Calu3 (cell line): ENCODE measurements at regions of chr5 and their contacts with region 1.

Region 1: GRCh38 chr5:172707285-172708182 is 63.5 kb downstream of the DUSP1 start:
- DNase-seq: peak; percentile 77
- H3K4me3 Mint-ChIP-seq: no peak overlapping the region
- H3K27ac Mint-ChIP-seq: no peak overlapping the region
- H3K4me1 Mint-ChIP-seq: no peaks in the 10 kb centered on the region
- H3K27me3 Mint-ChIP-seq: peaks cover 89% of the 10 kb centered on the region
- CTCF ChIP-seq: peak; percentile 75

Region 2: DNA sequence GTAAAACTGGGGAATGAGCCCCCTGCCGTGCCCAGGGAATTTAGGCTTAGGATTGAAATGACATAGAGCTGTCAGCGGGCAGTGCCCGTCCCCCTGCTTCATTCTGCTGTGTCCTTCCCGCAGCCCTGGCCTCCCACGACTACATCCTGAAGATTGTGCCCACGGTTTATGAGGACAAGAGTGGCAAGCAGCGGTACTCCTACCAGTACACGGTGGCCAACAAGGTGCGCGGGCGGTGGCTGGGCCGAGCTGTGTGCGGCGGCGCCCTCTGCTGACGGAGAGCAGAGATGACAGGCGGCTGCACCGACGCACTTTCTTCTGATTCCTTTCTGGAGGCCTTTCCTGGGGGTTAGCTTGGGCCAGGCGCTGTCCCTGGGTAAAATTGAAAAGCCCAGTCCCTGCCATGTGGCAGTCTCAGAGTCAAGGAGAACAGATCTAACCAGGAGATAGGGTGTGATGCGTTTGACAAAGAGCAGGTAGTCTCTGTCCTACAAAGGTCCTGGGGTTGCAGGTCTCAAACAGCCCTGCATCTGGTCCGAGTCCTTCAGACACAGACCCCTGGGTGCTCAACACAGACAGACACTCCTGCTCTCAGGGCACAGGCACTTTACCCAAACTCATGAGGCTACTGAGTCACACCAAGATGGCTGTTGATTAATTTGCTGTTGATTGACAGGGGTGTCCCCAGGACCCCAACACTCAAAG is 224.9 kb after region 1 on chr5:
- CTCF ChIA-PET with region 1: interaction called, 21 read pairs
- intact Hi-C with region 1: no loop called
- DNase-seq: peak; percentile 82
- H3K4me3 Mint-ChIP-seq: no peak overlapping the region
- H3K27ac Mint-ChIP-seq: no peak overlapping the region
- H3K4me1 Mint-ChIP-seq: peaks cover 14% of the 10 kb centered on the region
- H3K27me3 Mint-ChIP-seq: no peaks in the 10 kb centered on the region
- CTCF ChIP-seq: peak; percentile 98

Region 3: GRCh38 chr5:172939071-172939470 is 231.5 kb after region 1 on chr5:
- CTCF ChIA-PET with region 1: interaction called, 21 read pairs
- intact Hi-C with region 1: no loop called
- DNase-seq: peak; percentile 57
- H3K4me3 Mint-ChIP-seq: no peak overlapping the region
- H3K27ac Mint-ChIP-seq: no peak overlapping the region
- H3K4me1 Mint-ChIP-seq: no peaks in the 10 kb centered on the region
- H3K27me3 Mint-ChIP-seq: no peaks in the 10 kb centered on the region
- CTCF ChIP-seq: no peak

Region 4: DNA sequence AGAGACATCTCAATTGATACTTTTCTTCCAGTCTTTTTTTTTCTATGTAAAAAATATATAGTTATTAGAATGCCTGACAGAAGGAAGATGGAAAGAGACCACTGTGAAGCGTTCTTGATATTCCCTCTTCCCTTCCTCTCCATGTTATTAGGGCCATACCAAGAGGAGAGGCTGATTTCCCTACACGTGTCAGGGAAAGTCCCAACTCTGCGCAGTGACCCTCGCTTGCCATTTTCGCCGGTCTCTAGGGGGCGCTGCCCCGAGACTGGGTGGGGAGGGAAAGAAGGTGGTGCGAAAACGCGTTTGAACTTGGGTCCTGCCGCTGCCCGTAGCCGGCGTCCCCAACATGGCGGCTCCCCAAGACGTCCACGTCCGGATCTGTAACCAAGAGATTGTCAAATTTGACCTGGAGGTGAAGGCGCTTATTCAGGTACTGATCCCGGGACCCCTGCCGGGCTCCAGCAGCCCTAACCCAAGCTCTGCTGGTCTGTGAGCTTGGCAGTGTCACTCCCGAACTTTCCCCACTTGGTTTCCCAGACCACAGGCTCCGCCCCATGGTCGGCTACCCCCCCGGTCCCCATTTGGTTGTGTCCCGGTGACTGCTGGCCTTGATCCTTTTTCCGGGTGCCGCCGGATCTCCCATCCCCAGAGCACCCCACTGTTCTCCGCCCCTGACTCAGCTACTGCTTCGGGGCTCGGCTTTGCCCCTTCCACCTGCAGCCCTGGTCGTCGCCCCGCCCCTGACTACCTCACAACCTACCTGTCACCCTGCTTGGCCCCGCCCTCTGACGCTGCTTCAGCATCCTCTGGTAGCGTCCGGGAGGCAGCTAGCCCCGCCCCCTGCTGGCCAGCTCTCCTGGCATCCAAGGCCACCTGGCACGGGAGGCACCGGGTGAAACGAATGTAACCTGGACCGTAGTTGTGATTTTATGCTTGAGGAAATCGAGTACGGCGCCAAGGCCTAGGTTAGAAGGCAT is 437.0 kb after region 1 on chr5 and contains the start of gene BNIP1:
- CTCF ChIA-PET with region 1: interaction called, 3 read pairs
- intact Hi-C with region 1: loop called (anchors 5 kb)
- DNase-seq: peak; percentile 100
- H3K4me3 Mint-ChIP-seq: peak within 1 kb of the TSS; percentile 100
- H3K27ac Mint-ChIP-seq: peak within 1 kb of the TSS; percentile 99
- H3K4me1 Mint-ChIP-seq: peaks cover 11% of the 10 kb centered on the region
- H3K27me3 Mint-ChIP-seq: no peaks in the 10 kb centered on the region
- CTCF ChIP-seq: peak; percentile 95
- total RNA-seq, gene BNIP1: 13.4 and 13.6 TPM in 2 replicates

Region 5: DNA sequence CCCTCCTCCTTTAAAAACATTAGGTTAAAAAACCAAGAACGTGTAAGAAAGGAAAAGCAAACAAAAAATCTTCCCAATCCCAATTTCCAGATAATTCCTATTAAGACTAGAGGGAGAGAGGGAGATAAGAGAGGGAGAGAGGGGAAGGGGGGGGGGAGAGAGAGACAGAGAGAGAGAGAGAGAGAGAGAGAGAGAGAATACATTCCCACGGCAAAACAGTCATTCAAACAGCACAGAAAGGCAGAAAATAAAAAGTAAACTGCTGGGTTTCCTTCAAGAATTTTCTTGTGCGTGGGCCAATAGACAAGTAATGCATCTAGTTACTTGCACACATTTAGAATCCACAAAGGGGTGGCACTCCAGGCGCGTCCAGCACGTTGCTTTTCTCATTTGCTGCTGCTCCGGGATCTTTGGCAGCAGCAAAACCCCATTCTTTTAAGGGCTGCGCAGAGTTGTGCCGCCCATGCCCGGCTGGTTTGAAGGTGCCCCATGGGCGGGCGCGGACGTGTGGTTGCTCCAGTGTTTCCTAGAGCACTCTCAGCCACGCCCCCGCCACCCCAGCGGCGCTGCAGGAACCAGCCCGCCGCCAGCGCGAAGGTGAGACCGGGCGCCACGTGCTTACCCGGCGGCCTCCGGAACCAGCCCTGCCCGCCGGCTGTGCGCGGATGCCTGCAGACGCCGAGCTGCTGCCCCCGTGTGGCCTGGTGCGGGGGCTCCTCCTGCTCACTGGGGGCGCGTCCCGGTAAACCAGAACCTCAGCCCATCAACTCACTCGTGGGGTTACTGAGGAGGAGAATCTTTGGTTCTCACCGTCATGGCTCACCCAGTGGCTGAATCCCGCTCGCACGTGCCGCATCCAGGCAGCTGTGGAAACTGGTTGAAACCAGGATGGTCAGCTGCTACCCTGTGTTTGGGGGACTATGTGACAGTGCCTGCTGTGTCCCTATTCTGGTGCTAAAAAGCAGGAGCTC is 576.1 kb after region 1 on chr5:
- CTCF ChIA-PET with region 1: interaction called, 5 read pairs
- intact Hi-C with region 1: loop called (anchors 2 kb)
- DNase-seq: peak; percentile 92
- H3K4me3 Mint-ChIP-seq: peak overlapping the region; percentile 24
- H3K27ac Mint-ChIP-seq: no peak overlapping the region
- H3K4me1 Mint-ChIP-seq: no peaks in the 10 kb centered on the region
- H3K27me3 Mint-ChIP-seq: peaks cover 96% of the 10 kb centered on the region
- CTCF ChIP-seq: peak; percentile 72